ENCODE measurements at regions of chr15 and their contacts with region 1.

Region 1: DNA sequence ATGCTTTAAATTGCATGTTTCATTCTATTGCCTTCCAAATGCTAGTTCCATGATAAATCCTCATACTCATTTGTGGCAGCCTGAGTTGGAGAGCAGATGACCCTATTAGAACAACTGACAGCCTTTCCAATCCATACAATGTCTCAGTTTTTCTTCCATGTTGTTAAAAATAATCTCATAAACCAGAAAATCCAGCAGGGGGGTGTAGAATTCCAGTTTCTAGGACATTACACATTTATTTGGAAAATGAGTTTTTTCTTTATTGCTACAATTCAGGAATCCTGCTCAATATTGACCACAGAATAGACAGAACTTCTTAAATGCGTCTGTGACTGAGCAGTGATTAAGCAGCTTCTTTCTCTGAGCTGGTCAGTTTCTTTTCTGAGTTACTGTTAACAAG is 174.2 kb upstream of the ATP10A start:
- DNase-seq: no peak
- H3K4me3 ChIP-seq: no peak overlapping the region
- H3K4me3 Mint-ChIP-seq: no peak overlapping the region
- H3K27ac Mint-ChIP-seq: no peak overlapping the region
- H3K4me1 ChIP-seq: peaks cover 14% of the 10 kb centered on the region
- H3K4me1 Mint-ChIP-seq: peaks cover 15% of the 10 kb centered on the region
- H3K27me3 ChIP-seq: no peaks in the 10 kb centered on the region
- H3K27me3 Mint-ChIP-seq: no peaks in the 10 kb centered on the region
- CTCF ChIP-seq: no peak

Region 2: GRCh38 chr15:25811481-25811906 is 225.9 kb before region 1 on chr15:
- CTCF ChIA-PET with region 1: no interaction called
- POLR2A ChIA-PET with region 1: no interaction called
- intact Hi-C with region 1: no loop called
- DNase-seq: no peak
- H3K4me3 ChIP-seq: no peak overlapping the region
- H3K4me3 Mint-ChIP-seq: no peak overlapping the region
- H3K27ac Mint-ChIP-seq: peak overlapping the region; percentile 29
- H3K4me1 ChIP-seq: no peaks in the 10 kb centered on the region
- H3K4me1 Mint-ChIP-seq: no peaks in the 10 kb centered on the region
- H3K27me3 ChIP-seq: no peaks in the 10 kb centered on the region
- H3K27me3 Mint-ChIP-seq: peaks cover 8% of the 10 kb centered on the region
- CTCF ChIP-seq: no peak

Region 3: GRCh38 chr15:25830844-25831451 is 206.4 kb before region 1 on chr15:
- CTCF ChIA-PET with region 1: no interaction called
- POLR2A ChIA-PET with region 1: no interaction called
- intact Hi-C with region 1: no loop called
- DNase-seq: no peak
- H3K4me3 ChIP-seq: no peak overlapping the region
- H3K4me3 Mint-ChIP-seq: no peak overlapping the region
- H3K27ac Mint-ChIP-seq: no peak overlapping the region
- H3K4me1 ChIP-seq: no peaks in the 10 kb centered on the region
- H3K4me1 Mint-ChIP-seq: no peaks in the 10 kb centered on the region
- H3K27me3 ChIP-seq: no peaks in the 10 kb centered on the region
- H3K27me3 Mint-ChIP-seq: no peaks in the 10 kb centered on the region
- CTCF ChIP-seq: no peak

Region 4: GRCh38 chr15:25875566-25875965 is 161.8 kb before region 1 on chr15:
- CTCF ChIA-PET with region 1: no interaction called
- POLR2A ChIA-PET with region 1: no interaction called
- intact Hi-C with region 1: no loop called
- DNase-seq: no peak
- H3K4me3 ChIP-seq: no peak overlapping the region
- H3K4me3 Mint-ChIP-seq: no peak overlapping the region
- H3K27ac Mint-ChIP-seq: no peak overlapping the region
- H3K4me1 ChIP-seq: peaks cover 36% of the 10 kb centered on the region
- H3K4me1 Mint-ChIP-seq: peaks cover 15% of the 10 kb centered on the region
- H3K27me3 ChIP-seq: no peaks in the 10 kb centered on the region
- H3K27me3 Mint-ChIP-seq: no peaks in the 10 kb centered on the region
- CTCF ChIP-seq: no peak

Region 5: GRCh38 chr15:25989327-25989726 is 48.0 kb before region 1 on chr15:
- CTCF ChIA-PET with region 1: no interaction called
- POLR2A ChIA-PET with region 1: no interaction called
- intact Hi-C with region 1: no loop called
- DNase-seq: peak in 1 of 2 experiments; percentile 17
- H3K4me3 ChIP-seq: no peak overlapping the region
- H3K4me3 Mint-ChIP-seq: no peak overlapping the region
- H3K27ac Mint-ChIP-seq: no peak overlapping the region
- H3K4me1 ChIP-seq: no peaks in the 10 kb centered on the region
- H3K4me1 Mint-ChIP-seq: no peaks in the 10 kb centered on the region
- H3K27me3 ChIP-seq: no peaks in the 10 kb centered on the region
- H3K27me3 Mint-ChIP-seq: peaks cover 3% of the 10 kb centered on the region
- CTCF ChIP-seq: no peak

Region 6: DNA sequence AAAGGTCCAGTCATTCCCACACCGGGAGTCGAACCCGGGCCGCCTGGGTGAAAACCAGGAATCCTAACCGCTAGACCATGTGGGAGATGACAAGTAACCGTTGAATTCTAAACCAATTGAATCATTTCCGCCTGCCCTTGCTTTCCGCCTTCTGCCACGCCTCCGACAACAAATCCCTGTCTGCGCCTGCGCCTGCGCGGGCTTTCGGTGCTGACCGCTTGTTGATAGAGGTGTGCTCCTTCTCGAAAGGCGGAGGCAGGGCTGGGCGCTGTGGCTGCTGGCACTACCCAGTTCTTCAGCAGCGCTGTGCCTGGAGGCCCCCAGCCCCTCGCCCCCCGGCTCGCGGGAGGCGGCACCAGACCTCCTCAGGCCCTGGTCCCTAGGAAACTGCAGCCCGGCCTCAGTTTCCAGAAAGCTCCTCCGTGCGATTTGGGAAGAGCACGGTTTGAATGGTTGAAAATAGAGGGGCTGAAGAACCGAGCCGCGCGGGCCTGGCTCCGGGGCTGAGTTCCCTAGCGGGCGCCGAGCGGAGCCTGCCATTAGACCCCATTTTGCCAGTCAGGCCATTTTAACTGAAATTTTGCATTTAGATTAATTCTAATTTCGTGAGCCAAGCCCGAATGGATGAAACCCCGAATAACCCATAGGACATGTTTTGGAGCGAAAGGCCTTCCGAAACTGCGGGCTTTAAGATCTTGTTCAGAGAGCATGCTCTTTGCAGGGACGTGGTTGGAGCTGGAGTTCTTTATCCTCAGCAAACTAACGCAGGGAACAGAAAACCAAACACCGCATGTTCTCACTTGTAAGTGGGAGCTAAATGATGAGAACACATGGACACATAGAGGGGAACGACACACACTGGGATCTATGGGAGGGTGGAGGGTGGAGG is 45.1 kb after region 1 on chr15:
- CTCF ChIA-PET with region 1: no interaction called
- POLR2A ChIA-PET with region 1: no interaction called
- intact Hi-C with region 1: loop called (anchors 1 kb)
- DNase-seq: peak; percentile 97 to 98
- H3K4me3 ChIP-seq: peak overlapping the region; percentile 63
- H3K4me3 Mint-ChIP-seq: peak overlapping the region; percentile 94
- H3K27ac Mint-ChIP-seq: peak overlapping the region; percentile 89
- H3K4me1 ChIP-seq: no peaks in the 10 kb centered on the region
- H3K4me1 Mint-ChIP-seq: peaks cover 17% of the 10 kb centered on the region
- H3K27me3 ChIP-seq: no peaks in the 10 kb centered on the region
- H3K27me3 Mint-ChIP-seq: peaks cover 3% of the 10 kb centered on the region
- CTCF ChIP-seq: no peak

Region 7: GRCh38 chr15:26260517-26261133 is 223.3 kb after region 1 on chr15:
- CTCF ChIA-PET with region 1: no interaction called
- POLR2A ChIA-PET with region 1: no interaction called
- intact Hi-C with region 1: loop called (anchors 1 kb)
- DNase-seq: peak in 1 of 2 experiments; percentile 38
- H3K4me3 ChIP-seq: no peak overlapping the region
- H3K4me3 Mint-ChIP-seq: no peak overlapping the region
- H3K27ac Mint-ChIP-seq: no peak overlapping the region
- H3K4me1 ChIP-seq: no peaks in the 10 kb centered on the region
- H3K4me1 Mint-ChIP-seq: no peaks in the 10 kb centered on the region
- H3K27me3 ChIP-seq: no peaks in the 10 kb centered on the region
- H3K27me3 Mint-ChIP-seq: peaks cover 3% of the 10 kb centered on the region
- CTCF ChIP-seq: peak; percentile 64 to 84